ENCODE measurements at regions of chr1 and their contacts with region 1.

Region 1: GRCh38 chr1:156608036-156608674 is 6.9 kb upstream of the GPATCH4 start:
- DNase-seq: peak; percentile 75
- ATAC-seq: peak; percentile 99
- H3K4me3 ChIP-seq: no peak overlapping the region
- H3K27ac ChIP-seq: no peak overlapping the region
- H3K4me1 ChIP-seq: no peaks in the 10 kb centered on the region
- H3K27me3 ChIP-seq: peaks cover 21% of the 10 kb centered on the region
- CTCF ChIP-seq: peak; percentile 86
- POLR2A ChIP-seq: no peak
- RAD21 ChIP-seq: peak; percentile 82

Region 2: GRCh38 chr1:156308078-156308477 is 300.1 kb before region 1 on chr1:
- CTCF ChIA-PET with region 1: no interaction called
- POLR2A ChIA-PET with region 1: no interaction called
- dilution Hi-C with region 1: no loop called
- in situ Hi-C with region 1: no loop called
- intact Hi-C with region 1: no loop called
- DNase-seq: peak; percentile 83
- ATAC-seq: peak; percentile 92
- H3K4me3 ChIP-seq: no peak overlapping the region
- H3K27ac ChIP-seq: no peak overlapping the region
- H3K4me1 ChIP-seq: peaks cover 5% of the 10 kb centered on the region
- H3K27me3 ChIP-seq: no peaks in the 10 kb centered on the region
- CTCF ChIP-seq: no peak
- POLR2A ChIP-seq: no peak
- RAD21 ChIP-seq: no peak

Region 3: GRCh38 chr1:156383023-156383422 is 225.1 kb before region 1 on chr1:
- CTCF ChIA-PET with region 1: interaction called, 5 read pairs
- POLR2A ChIA-PET with region 1: no interaction called
- dilution Hi-C with region 1: no loop called
- in situ Hi-C with region 1: loop called (anchors 5 kb)
- intact Hi-C with region 1: loop called (anchors 1 kb)
- DNase-seq: peak; percentile 51
- ATAC-seq: peak; percentile 98
- H3K4me3 ChIP-seq: no peak overlapping the region
- H3K27ac ChIP-seq: no peak overlapping the region
- H3K4me1 ChIP-seq: no peaks in the 10 kb centered on the region
- H3K27me3 ChIP-seq: peaks cover 23% of the 10 kb centered on the region
- CTCF ChIP-seq: peak; percentile 86
- POLR2A ChIP-seq: no peak
- RAD21 ChIP-seq: peak; percentile 87

Region 4: GRCh38 chr1:156456622-156457465 is 151.3 kb before region 1 on chr1:
- CTCF ChIA-PET with region 1: no interaction called
- POLR2A ChIA-PET with region 1: no interaction called
- dilution Hi-C with region 1: no loop called
- in situ Hi-C with region 1: no loop called
- intact Hi-C with region 1: loop called (anchors 1 kb)
- DNase-seq: peak; percentile 97
- ATAC-seq: peak; percentile 88
- H3K4me3 ChIP-seq: peak overlapping the region; percentile 43
- H3K27ac ChIP-seq: peak overlapping the region; percentile 87
- H3K4me1 ChIP-seq: peaks cover 4% of the 10 kb centered on the region; the same call in 1 of the 2 replicates
- H3K27me3 ChIP-seq: peaks cover 2% of the 10 kb centered on the region
- CTCF ChIP-seq: no peak
- POLR2A ChIP-seq: peak; percentile 63; the same call in 1 of the 2 replicates
- RAD21 ChIP-seq: no peak

Region 5: GRCh38 chr1:156467906-156468305 is 140.2 kb before region 1 on chr1:
- CTCF ChIA-PET with region 1: no interaction called
- POLR2A ChIA-PET with region 1: no interaction called
- dilution Hi-C with region 1: no loop called
- in situ Hi-C with region 1: no loop called
- intact Hi-C with region 1: no loop called
- DNase-seq: no peak
- ATAC-seq: no peak
- H3K4me3 ChIP-seq: no peak overlapping the region
- H3K27ac ChIP-seq: no peak overlapping the region
- H3K4me1 ChIP-seq: peaks cover 10% of the 10 kb centered on the region
- H3K27me3 ChIP-seq: no peaks in the 10 kb centered on the region
- CTCF ChIP-seq: no peak
- POLR2A ChIP-seq: no peak
- RAD21 ChIP-seq: no peak

Region 6: DNA sequence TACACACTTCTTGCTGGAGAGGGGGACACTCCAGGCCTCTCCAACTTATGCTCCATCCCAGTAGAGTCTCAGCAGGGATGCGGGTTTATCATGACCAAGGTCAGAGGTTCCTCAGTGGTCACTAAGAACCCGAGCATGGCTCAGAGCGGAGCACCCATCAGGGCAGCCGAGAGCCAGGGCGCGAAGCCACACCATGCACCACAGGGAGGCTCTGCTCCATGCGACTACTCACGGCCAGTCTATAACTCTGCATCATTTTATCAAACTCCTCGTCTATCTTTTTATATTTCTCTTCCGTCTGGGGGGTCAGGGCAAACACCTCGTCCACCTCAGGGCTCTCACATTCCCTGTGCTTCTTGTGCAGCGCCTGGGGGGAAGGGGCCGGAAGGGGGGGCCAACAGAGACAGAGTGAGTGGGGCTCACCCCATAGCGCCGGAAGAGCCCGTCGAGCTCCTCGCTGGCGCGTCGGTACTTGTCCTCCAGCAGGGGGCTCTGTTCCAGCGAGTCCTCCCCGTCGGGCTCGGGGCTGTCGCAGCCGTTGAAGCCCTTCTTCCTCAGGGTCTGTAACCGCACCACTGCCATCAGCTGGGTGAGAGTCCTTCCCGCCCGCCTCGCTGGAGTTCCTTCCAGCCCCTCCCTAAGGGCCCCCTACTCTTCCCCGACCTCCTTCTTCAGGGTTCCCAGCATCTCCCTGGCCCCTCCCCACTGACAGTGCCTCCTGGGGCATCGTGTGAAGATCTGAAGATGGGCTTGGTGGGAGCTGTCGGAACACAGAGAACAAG is 127.6 kb before region 1 on chr1:
- CTCF ChIA-PET with region 1: no interaction called
- POLR2A ChIA-PET with region 1: no interaction called
- dilution Hi-C with region 1: no loop called
- in situ Hi-C with region 1: no loop called
- intact Hi-C with region 1: loop called (anchors 2 kb)
- DNase-seq: peak; percentile 50
- ATAC-seq: peak; percentile 65; the same call in 1 of the 2 replicates
- H3K4me3 ChIP-seq: no peak overlapping the region
- H3K27ac ChIP-seq: no peak overlapping the region
- H3K4me1 ChIP-seq: peaks cover 33% of the 10 kb centered on the region
- H3K27me3 ChIP-seq: no peaks in the 10 kb centered on the region
- CTCF ChIP-seq: peak; percentile 63
- POLR2A ChIP-seq: no peak
- RAD21 ChIP-seq: peak; percentile 63

Region 7: DNA sequence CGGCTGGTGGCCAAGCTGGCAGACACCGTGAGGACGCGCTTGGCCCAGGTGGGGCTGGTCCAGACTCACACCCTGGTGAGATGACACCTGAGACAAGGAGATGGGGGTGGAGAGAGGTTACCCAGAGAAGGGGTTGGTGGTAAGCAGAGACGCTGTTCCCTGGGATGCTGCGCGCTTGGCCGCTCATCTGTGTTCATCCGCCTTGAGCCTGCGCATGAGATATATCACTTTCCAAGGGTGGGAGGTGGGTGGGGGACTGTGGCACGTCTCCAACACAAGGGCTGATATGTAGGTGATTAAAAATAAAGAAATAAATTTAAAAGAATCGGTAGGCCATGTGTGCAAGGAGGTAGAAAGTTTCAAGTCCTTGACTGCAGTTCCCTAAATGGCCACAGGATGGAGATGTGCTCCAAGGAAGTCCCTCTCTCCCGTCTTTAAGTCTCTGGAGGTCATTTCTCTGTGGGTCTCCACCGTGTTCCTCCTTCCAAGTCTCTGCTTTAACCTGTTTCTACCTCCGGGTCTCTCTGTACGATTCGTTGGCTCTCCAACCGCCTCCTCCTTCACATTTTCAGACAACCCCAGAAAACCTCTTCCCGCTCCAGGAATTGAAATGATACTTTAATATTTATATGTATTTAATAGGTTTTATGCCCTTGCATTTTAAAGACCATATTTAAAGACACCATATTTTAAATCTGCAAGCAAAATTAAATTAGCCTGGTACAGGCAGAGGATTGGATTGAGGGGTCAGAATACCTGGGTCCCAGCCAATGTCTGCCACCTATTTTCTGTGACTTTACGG is 24.1 kb before region 1 on chr1:
- CTCF ChIA-PET with region 1: interaction called, 3 read pairs
- POLR2A ChIA-PET with region 1: no interaction called
- dilution Hi-C with region 1: no loop called
- in situ Hi-C with region 1: no loop called
- intact Hi-C with region 1: loop called (anchors 1 kb)
- DNase-seq: peak; percentile 84
- ATAC-seq: peak; percentile 98
- H3K4me3 ChIP-seq: no peak overlapping the region
- H3K27ac ChIP-seq: no peak overlapping the region
- H3K4me1 ChIP-seq: no peaks in the 10 kb centered on the region
- H3K27me3 ChIP-seq: peaks cover 18% of the 10 kb centered on the region
- CTCF ChIP-seq: peak; percentile 92
- POLR2A ChIP-seq: no peak
- RAD21 ChIP-seq: peak; percentile 90

Region 8: GRCh38 chr1:156689035-156689952 is 81.1 kb after region 1 on chr1:
- CTCF ChIA-PET with region 1: no interaction called
- POLR2A ChIA-PET with region 1: no interaction called
- dilution Hi-C with region 1: no loop called
- in situ Hi-C with region 1: no loop called
- intact Hi-C with region 1: no loop called
- DNase-seq: peak; percentile 80
- ATAC-seq: peak; percentile 96
- H3K4me3 ChIP-seq: peak overlapping the region; percentile 13; the same call in 1 of the 2 replicates
- H3K27ac ChIP-seq: no peak overlapping the region
- H3K4me1 ChIP-seq: peaks cover 7% of the 10 kb centered on the region; the same call in 1 of the 2 replicates
- H3K27me3 ChIP-seq: peaks cover 3% of the 10 kb centered on the region; the same call in 1 of the 2 replicates
- CTCF ChIP-seq: peak; percentile 96
- POLR2A ChIP-seq: no peak
- RAD21 ChIP-seq: peak; percentile 98